Common myeloid progenitor, CD34-positive (primary cell): ENCODE measurements at regions of chr7 and their contacts with region 1.

Region 1: DNA sequence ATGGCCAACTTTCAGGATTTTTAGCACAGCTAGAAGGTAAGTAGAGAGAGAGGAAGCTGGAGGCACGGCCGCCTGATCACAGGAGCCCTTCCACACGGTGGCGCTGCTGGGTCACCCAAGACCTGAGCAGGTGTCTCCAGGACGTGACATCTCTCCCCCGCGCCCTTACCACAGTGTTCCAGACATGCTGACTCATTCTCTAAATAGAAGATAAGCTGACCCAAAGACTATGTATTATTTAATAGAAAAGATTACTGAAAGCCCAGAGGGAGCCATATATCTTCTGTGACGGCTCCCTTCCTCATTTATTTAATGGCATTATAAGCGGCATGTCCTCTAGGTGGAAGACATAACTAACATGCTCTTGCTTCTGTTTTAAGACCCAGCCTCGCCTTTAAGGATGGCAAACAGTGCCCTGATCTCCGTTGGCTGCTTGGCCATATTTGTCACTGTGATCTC is 26.0 kb upstream of the MALSU1 start:
- DNase-seq: peak; percentile 93 to 96 (median 96)
- H3K4me3 ChIP-seq: peak overlapping the region in 6 of 7 experiments; percentile 15 to 62 (median 38)
- H3K27ac ChIP-seq: no peak overlapping the region
- H3K4me1 ChIP-seq: peaks cover 3 to 20% (median 7%) of the 10 kb centered on the region in 4 experiments
- H3K27me3 ChIP-seq: no peaks in the 10 kb centered on the region

Region 2: DNA sequence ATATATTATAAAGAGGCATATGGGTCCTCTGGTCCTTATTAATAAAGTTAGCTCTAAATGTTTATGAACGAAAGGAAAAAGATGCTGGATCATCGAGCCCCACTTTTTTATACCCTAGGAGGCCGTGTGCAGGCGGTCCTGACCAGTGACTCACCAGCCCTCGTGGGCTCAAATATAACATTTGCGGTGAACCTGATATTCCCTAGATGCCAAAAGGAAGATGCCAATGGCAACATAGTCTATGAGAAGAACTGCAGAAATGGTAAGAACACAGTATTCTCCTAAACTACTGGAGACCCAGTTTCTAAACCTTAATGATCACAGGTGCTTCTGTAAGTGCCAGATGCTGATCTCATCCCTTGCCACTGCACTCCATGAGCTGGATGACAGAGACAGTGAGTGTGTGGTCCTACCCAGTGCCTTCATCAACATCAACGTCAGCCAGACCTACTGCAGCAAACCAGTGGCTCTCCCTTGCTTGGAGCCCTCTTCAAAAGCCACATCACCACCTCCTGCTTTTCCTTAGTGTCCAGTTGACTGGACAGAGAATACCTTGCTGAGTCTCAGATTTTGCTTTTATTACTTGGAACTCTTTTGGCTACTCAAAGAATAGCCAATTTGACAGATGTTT is 19.0 kb before region 1 on chr7:
- CTCF ChIA-PET with region 1: interaction called, 72 read pairs
- POLR2A ChIA-PET with region 1: no interaction called
- DNase-seq: no peak
- H3K4me3 ChIP-seq: no peak overlapping the region
- H3K27ac ChIP-seq: no peak overlapping the region
- H3K4me1 ChIP-seq: no peaks in the 10 kb centered on the region
- H3K27me3 ChIP-seq: peaks cover 0 to 3% (median 2%) of the 10 kb centered on the region in 5 experiments

Region 3: GRCh38 chr7:23261843-23262452 is 11.2 kb before region 1 on chr7:
- CTCF ChIA-PET with region 1: interaction called, 72 read pairs
- POLR2A ChIA-PET with region 1: no interaction called
- DNase-seq: peak; percentile 70 to 80 (median 79)
- H3K4me3 ChIP-seq: no peak overlapping the region
- H3K27ac ChIP-seq: no peak overlapping the region
- H3K4me1 ChIP-seq: no peaks in the 10 kb centered on the region
- H3K27me3 ChIP-seq: peaks cover 0 to 2% (median 0%) of the 10 kb centered on the region in 5 experiments

Region 4: DNA sequence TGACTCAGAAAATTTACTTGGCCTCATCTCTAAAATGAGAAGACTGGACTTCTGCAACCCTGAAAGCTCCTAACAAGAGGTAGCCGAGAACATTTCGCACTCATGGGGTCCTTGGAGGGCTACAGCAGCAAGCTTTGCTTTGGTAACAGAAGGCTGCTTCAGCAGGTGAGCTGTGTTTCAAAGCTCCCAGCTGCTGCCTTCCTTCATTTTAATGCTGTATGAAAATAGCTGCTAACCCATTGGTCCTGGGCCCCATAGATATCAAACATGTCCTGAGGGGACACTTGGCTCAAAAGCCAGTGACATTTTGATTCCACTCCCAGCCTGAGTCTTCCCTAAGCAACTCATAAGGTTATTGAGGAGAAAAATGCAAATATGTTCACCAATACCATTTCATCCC is 11.7 kb after region 1 on chr7:
- CTCF ChIA-PET with region 1: interaction called, 11 read pairs
- POLR2A ChIA-PET with region 1: no interaction called
- DNase-seq: no peak
- H3K4me3 ChIP-seq: no peak overlapping the region
- H3K27ac ChIP-seq: no peak overlapping the region
- H3K4me1 ChIP-seq: peaks cover 0 to 10% (median 0%) of the 10 kb centered on the region in 4 experiments
- H3K27me3 ChIP-seq: no peaks in the 10 kb centered on the region

Region 5: DNA sequence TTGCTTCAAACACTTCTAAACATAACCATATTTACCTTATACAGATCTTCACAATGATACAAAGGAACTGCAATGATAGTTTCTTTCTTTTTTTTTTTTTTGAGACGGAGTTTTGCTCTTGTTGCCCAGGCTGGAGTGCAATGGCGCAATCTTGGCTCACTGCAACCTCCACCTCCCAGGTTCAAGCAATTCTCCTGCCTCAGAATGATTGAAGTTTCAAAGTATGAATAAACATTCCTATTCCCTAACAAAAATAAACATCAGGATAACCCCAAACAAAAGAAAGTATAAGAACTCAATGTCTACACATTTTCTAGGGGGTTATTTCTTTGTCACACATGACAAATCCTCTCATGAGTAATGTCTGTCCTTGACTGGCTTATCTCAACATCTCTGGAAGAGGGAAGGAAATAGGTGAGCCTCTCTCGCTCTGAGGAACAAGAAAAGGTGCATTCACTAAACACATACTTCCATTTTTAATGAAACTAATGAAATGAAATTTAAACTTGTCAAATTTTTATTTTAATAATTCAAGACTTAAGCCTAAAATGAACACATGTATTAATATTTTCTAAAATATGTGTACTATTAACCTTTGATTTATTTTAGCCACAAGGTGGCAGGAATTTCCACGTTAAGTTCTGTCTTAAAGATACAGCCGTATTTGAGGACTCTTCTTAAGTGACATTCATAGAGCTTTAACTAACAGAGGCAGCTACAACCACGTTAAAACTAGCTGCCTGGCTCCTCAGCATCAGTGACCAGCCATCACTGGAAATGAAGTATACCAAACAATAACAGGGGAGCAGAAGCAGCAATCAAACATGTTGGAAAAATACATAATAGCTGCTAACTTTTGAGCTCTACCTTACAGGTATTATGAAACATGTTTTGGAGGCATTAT is 84.3 kb after region 1 on chr7:
- CTCF ChIA-PET with region 1: interaction called, 17 read pairs
- POLR2A ChIA-PET with region 1: no interaction called
- DNase-seq: peak in 2 of 3 donors; percentile 61 to 63
- H3K4me3 ChIP-seq: no peak overlapping the region
- H3K27ac ChIP-seq: no peak overlapping the region
- H3K4me1 ChIP-seq: peaks cover 4 to 38% (median 9%) of the 10 kb centered on the region in 4 experiments
- H3K27me3 ChIP-seq: no peaks in the 10 kb centered on the region

Region 6: GRCh38 chr7:23472956-23473843 is 200.0 kb after region 1 on chr7:
- CTCF ChIA-PET with region 1: interaction called, 10 read pairs
- POLR2A ChIA-PET with region 1: no interaction called
- DNase-seq: peak in 2 of 3 donors; percentile 20 to 26
- H3K4me3 ChIP-seq: peak overlapping the region in 2 of 7 experiments; percentile 90 to 97
- H3K27ac ChIP-seq: peak overlapping the region in 1 of 2 experiments; percentile 77
- H3K4me1 ChIP-seq: peaks cover 33 to 42% (median 37%) of the 10 kb centered on the region in 4 experiments
- H3K27me3 ChIP-seq: peaks cover 0 to 98% (median 51%) of the 10 kb centered on the region in 5 experiments

Region 7: GRCh38 chr7:23622506-23622925 is 349.3 kb after region 1 on chr7:
- CTCF ChIA-PET with region 1: no interaction called
- POLR2A ChIA-PET with region 1: no interaction called
- DNase-seq: no peak
- H3K4me3 ChIP-seq: no peak overlapping the region
- H3K27ac ChIP-seq: no peak overlapping the region
- H3K4me1 ChIP-seq: no peaks in the 10 kb centered on the region
- H3K27me3 ChIP-seq: no peaks in the 10 kb centered on the region